ENCODE measurements at regions of chr3 and their contacts with region 1.

Region 1: GRCh38 chr3:46866720-46867549 is 3.7 kb upstream of the MYL3 start:
- H3K4me3 Mint-ChIP-seq: no peak overlapping the region
- H3K27ac Mint-ChIP-seq: no peak overlapping the region
- H3K4me1 Mint-ChIP-seq: peaks cover 13% of the 10 kb centered on the region
- H3K27me3 Mint-ChIP-seq: peaks cover 6% of the 10 kb centered on the region

Region 2: DNA sequence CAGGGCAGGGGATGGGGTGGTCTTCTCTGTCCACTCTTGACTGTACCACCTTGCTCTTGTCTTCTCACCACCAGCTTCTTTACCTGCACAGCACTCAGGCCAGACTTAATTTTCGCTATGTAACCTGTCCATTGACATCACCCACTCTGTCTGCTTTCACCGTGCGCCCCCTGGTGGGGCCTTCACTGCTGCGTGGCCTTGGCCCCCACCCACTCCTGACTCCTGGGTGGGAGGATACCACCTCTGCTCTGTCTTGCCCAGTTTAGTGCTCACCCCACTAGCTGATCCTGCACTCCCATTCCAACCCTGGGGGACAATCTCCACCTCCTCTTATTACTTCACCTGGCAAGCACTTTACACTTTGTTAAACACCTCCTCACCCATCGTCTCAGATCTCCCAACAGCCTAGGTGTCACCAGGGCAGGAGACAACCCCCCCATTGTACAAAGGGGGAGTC is 28.3 kb after region 1 on chr3:
- intact Hi-C with region 1: loop called (anchors 2 kb)
- H3K4me3 Mint-ChIP-seq: no peak overlapping the region
- H3K27ac Mint-ChIP-seq: no peak overlapping the region
- H3K4me1 Mint-ChIP-seq: peaks cover 36% of the 10 kb centered on the region
- H3K27me3 Mint-ChIP-seq: peaks cover 85% of the 10 kb centered on the region

Region 3: DNA sequence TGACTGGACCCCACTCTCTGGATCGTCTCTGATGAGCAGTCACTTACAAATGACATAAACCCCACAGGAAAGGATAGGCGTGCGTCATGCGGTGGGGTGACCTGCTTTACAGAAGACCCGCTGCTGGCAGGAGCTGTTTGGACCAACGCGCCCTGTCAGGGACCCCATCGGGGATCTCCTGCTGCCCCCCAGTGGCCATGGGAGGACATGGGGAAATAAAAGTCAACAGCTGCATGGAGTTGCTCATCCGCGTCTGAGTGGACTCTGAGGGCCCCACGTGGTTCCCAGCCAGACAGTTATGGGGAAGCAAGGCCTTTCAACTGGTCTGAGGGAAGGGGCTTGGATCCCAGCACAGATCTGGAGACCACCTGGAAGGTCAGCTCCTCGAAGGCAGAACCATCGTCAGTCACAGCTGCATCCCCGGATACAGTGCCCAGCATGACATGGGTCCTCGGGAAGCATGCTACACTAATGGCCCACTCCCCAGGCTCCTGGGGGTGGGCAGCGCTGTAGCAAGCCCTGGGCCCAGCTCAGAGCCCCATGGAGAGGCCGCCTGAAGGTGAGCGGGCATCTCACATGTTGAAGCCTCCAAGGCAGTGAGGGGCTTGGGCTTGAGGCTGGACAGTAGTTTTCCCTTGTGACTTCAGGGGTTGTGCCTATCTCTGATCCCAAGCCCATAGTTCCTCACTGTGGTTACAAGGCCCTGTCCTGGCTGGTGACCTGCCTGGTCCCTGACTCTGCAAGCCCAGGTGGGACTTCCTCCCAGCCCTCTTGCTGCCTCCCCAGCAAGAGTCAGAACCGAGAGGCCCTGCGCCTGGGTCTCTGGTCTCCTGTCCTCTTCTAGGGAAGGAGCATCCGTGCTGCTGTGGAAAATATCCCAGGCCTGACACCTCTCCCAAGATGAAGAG is 42.9 kb after region 1 on chr3:
- intact Hi-C with region 1: loop called (anchors 2 kb)
- H3K4me3 Mint-ChIP-seq: no peak overlapping the region
- H3K27ac Mint-ChIP-seq: no peak overlapping the region
- H3K4me1 Mint-ChIP-seq: peaks cover 5% of the 10 kb centered on the region
- H3K27me3 Mint-ChIP-seq: peaks cover 3% of the 10 kb centered on the region